Ovary (tissue), 10 donors: ENCODE measurements at regions of chr3 and their contacts with region 1.

Region 1: GRCh38 chr3:37210230-37210629 is 35.8 kb upstream of the LRRFIP2 start:
- DNase-seq: no peak
- H3K4me3 ChIP-seq: no peak overlapping the region
- H3K27ac ChIP-seq: no peak overlapping the region
- H3K4me1 ChIP-seq: no peaks in the 10 kb centered on the region
- H3K27me3 ChIP-seq: no peaks in the 10 kb centered on the region
- CTCF ChIP-seq: no peak
- EP300 ChIP-seq: no peak
- POLR2A ChIP-seq: no peak

Region 2: GRCh38 chr3:36993326-36994283 is 216.6 kb before region 1 on chr3 and contains the start of gene MLH1:
- intact Hi-C with region 1: loop called in 1 of 4 experiments (anchors 10 kb)
- DNase-seq: peak; percentile 96 to 100 (median 98)
- H3K4me3 ChIP-seq: peak within 1 kb of the TSS; percentile 84
- H3K27ac ChIP-seq: peak within 1 kb of the TSS; percentile 98
- H3K4me1 ChIP-seq: peaks cover 5% of the 10 kb centered on the region
- H3K27me3 ChIP-seq: no peaks in the 10 kb centered on the region
- CTCF ChIP-seq: peak in 1 of 3 donors; percentile 20
- EP300 ChIP-seq: peak; percentile 81
- POLR2A ChIP-seq: peak; percentile 76
- total RNA-seq, gene MLH1: 16.8 to 31.0 (median 21.4) TPM

Region 3: GRCh38 chr3:37024092-37024491 is 186.1 kb before region 1 on chr3:
- intact Hi-C with region 1: loop called in 1 of 4 experiments (anchors 10 kb)
- DNase-seq: no peak
- H3K4me3 ChIP-seq: no peak overlapping the region
- H3K27ac ChIP-seq: no peak overlapping the region
- H3K4me1 ChIP-seq: no peaks in the 10 kb centered on the region
- H3K27me3 ChIP-seq: no peaks in the 10 kb centered on the region
- CTCF ChIP-seq: peak in 1 of 3 donors; percentile 12
- EP300 ChIP-seq: no peak
- POLR2A ChIP-seq: no peak

Region 4: GRCh38 chr3:37262888-37263287 is 52.7 kb after region 1 on chr3:
- intact Hi-C with region 1: no loop called
- DNase-seq: no peak
- H3K4me3 ChIP-seq: no peak overlapping the region
- H3K27ac ChIP-seq: no peak overlapping the region
- H3K4me1 ChIP-seq: no peaks in the 10 kb centered on the region
- H3K27me3 ChIP-seq: no peaks in the 10 kb centered on the region
- CTCF ChIP-seq: no peak
- EP300 ChIP-seq: no peak
- POLR2A ChIP-seq: no peak